Endothelial cell of umbilical vein (primary cell): ENCODE measurements at regions of chr14 and their contacts with region 1.

Region 1: GRCh38 chr14:102362545-102363181 is at the starts of genes CINP and TECPR2:
- DNase-seq: peak; percentile 95
- H3K4me3 ChIP-seq: peak within 1 kb of the TSS; percentile 71 to 94 (median 94)
- H3K27ac ChIP-seq: peak within 1 kb of the TSS; percentile 78
- H3K4me1 ChIP-seq: peaks cover 17% of the 10 kb centered on the region
- H3K27me3 ChIP-seq: no peaks in the 10 kb centered on the region
- CTCF ChIP-seq: no peak
- POLR2A ChIP-seq: peak; percentile 95
- total RNA-seq, gene CINP: 42.1 and 44.0 TPM in 2 replicates
- total RNA-seq, gene TECPR2: 21.5 TPM in 2 replicates

Region 2: GRCh38 chr14:102333795-102334705 is 28.6 kb before region 1 on chr14:
- CTCF ChIA-PET with region 1: no interaction called
- POLR2A ChIA-PET with region 1: no interaction called
- dilution Hi-C with region 1: no loop called
- intact Hi-C with region 1: no loop called
- DNase-seq: no peak
- H3K4me3 ChIP-seq: no peak overlapping the region
- H3K27ac ChIP-seq: no peak overlapping the region
- H3K4me1 ChIP-seq: no peaks in the 10 kb centered on the region
- H3K27me3 ChIP-seq: no peaks in the 10 kb centered on the region
- CTCF ChIP-seq: no peak
- POLR2A ChIP-seq: no peak

Region 3: GRCh38 chr14:102351026-102351425 is 11.6 kb before region 1 on chr14:
- CTCF ChIA-PET with region 1: interaction called, 4 read pairs
- POLR2A ChIA-PET with region 1: no interaction called
- dilution Hi-C with region 1: no loop called
- intact Hi-C with region 1: loop called (anchors 1 kb)
- DNase-seq: peak; percentile 93
- H3K4me3 ChIP-seq: no peak overlapping the region
- H3K27ac ChIP-seq: peak overlapping the region; percentile 75
- H3K4me1 ChIP-seq: peaks cover 18% of the 10 kb centered on the region
- H3K27me3 ChIP-seq: no peaks in the 10 kb centered on the region
- CTCF ChIP-seq: no peak
- POLR2A ChIP-seq: no peak

Region 4: GRCh38 chr14:102474934-102475333 is 112.3 kb after region 1 on chr14:
- CTCF ChIA-PET with region 1: no interaction called
- POLR2A ChIA-PET with region 1: no interaction called
- dilution Hi-C with region 1: no loop called
- intact Hi-C with region 1: no loop called
- DNase-seq: no peak
- H3K4me3 ChIP-seq: no peak overlapping the region
- H3K27ac ChIP-seq: no peak overlapping the region
- H3K4me1 ChIP-seq: no peaks in the 10 kb centered on the region
- H3K27me3 ChIP-seq: no peaks in the 10 kb centered on the region
- CTCF ChIP-seq: no peak
- POLR2A ChIP-seq: no peak

Region 5: GRCh38 chr14:102509744-102510615 is 147.3 kb after region 1 on chr14 and contains the start of gene ANKRD9:
- CTCF ChIA-PET with region 1: no interaction called
- POLR2A ChIA-PET with region 1: no interaction called
- dilution Hi-C with region 1: no loop called
- intact Hi-C with region 1: loop called (anchors 10 kb)
- DNase-seq: peak; percentile 94
- H3K4me3 ChIP-seq: peak within 1 kb of the TSS; percentile 3 to 60 (median 57)
- H3K27ac ChIP-seq: peak within 1 kb of the TSS; percentile 63
- H3K4me1 ChIP-seq: peaks cover 6% of the 10 kb centered on the region
- H3K27me3 ChIP-seq: no peaks in the 10 kb centered on the region
- CTCF ChIP-seq: no peak
- POLR2A ChIP-seq: no peak
- total RNA-seq, gene ANKRD9: 24.6 and 25.9 TPM in 2 replicates